ENCODE measurements at regions of chr17 and their contacts with region 1.

Region 1: GRCh38 chr17:39872751-39873150 is 4.7 kb downstream of the ZPBP2 start:
- DNase-seq: no peak
- CTCF ChIP-seq: peak; percentile 19

Region 2: GRCh38 chr17:39861235-39861634 is 11.5 kb before region 1 on chr17:
- CTCF ChIA-PET with region 1: no interaction called
- POLR2A ChIA-PET with region 1: no interaction called
- DNase-seq: no peak
- CTCF ChIP-seq: no peak

Region 3: GRCh38 chr17:39889200-39889599 is 16.4 kb after region 1 on chr17:
- CTCF ChIA-PET with region 1: interaction called, 11 read pairs
- POLR2A ChIA-PET with region 1: no interaction called
- DNase-seq: no peak
- CTCF ChIP-seq: no peak

Measured in GM10248 (cell line).